Head of caudate nucleus (tissue), 42 donors: ENCODE measurements at regions of chr17 and their contacts with region 1.

Region 1: DNA sequence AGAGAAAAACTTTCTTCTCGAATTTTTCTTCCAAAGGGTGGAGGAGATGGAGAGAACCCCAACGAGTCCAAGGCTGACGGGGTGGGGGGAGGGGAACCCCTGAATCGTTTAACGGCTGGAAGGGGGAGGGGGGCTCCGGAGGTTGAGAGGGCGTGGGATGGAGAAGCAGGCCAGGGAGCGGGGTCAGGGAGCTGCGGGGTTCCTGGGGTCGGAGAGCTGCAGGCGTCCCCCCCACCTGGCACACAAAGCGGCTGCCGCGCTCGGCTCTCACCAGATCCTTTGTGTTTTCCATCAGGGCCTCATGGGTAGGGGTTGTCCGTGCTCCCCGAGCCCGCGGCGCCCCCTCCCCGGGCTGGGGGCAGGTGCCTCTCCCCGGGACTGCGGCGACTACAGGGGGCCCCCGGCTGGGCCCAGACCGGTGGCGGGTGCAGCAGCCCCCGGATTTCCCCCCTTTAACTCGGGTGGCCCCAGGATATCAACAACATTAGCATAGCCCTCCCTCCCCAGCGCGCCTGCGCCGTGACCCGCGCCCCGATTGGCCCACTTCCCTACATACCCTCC is at the start of gene MBTD1:
- DNase-seq: peak in 40 of 42 donors; percentile 92 to 100 (median 98)

Region 2: DNA sequence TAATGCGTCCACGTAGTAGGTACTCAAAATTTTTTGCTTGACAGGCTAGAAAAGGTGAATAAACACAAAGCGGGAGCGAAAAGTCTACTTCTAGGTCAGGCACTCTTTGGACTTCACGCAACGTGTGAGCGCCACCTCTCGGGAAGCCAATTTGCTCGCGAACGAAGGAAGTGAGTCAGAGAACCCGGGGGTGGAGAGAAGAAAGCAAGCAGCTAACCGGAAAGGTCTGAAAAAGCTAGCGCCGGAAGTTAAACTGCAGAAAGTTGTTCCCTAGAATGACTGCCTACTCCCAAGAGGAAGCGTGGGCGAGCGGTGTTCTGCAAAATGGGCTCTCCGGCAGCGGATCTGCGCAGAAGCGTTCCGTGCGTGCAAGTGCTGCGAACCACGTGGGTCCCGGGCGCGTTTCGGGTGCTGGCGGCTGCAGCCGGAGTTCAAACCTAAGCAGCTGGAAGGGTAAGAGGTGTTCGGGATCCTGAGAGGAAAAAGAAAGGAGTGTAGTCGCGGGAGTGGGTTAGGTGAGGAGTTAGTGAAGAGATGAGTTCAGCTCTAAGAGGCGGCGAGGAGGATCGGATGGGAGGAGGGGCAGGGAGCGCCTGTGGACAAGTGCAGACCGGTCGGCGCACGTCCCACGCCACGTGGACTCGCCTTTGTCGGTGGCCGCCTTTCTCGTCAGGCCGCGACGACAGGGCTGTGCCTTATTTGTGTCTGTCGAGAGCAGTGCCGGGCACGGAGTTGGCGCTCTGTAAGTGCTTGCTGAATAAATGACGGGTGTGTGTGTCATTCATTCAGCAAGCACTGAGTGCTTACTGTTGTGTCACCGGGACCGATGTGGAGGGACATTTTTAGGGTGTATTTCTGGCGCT is 106.2 kb before region 1 on chr17 and contains the start of gene NME1:
- intact Hi-C with region 1: no loop called
- DNase-seq: peak; percentile 94 to 99 (median 98)

Region 3: GRCh38 chr17:51166197-51166986 is 93.3 kb before region 1 on chr17 and contains the start of gene NME2:
- intact Hi-C with region 1: loop called (anchors 10 kb)
- DNase-seq: peak; percentile 36 to 89 (median 80)

Region 4: DNA sequence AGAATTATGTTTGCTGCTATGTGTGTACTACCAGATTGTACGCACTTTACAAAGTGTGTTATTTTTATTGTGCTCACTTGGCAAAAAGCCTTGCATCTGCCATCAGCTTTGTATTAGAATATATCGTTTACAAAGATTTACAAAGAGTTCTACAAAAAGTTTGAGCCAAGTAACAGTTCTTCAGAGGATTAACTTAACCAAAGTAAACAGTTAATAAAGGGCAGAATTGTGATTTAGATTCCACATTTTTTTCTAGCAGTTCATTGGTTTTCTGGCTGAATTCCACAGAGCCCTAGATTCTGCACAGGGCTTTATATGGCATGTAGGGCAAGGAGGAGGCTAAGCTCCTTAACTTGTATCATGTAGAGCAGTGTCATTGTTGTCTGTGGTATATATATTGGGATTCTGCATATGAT is 30.1 kb after region 1 on chr17:
- intact Hi-C with region 1: no loop called
- DNase-seq: no peak